Right ventricle myocardium inferior (tissue), 1 donor: ENCODE measurements at regions of chr2 and their contacts with region 1.

Region 1: GRCh38 chr2:7026742-7027141 is 109.5 kb downstream of the RNF144A start:
- DNase-seq: no peak
- ATAC-seq: no peak

Region 2: GRCh38 chr2:6917071-6917760 is 109.5 kb before region 1 on chr2 and contains the start of gene RNF144A:
- intact Hi-C with region 1: loop called (anchors 5 kb)
- DNase-seq: peak; percentile 88
- ATAC-seq: peak; percentile 86
- total RNA-seq, gene RNF144A: 16.9 TPM

Region 3: GRCh38 chr2:7007846-7008741 is 18.6 kb before region 1 on chr2:
- intact Hi-C with region 1: loop called (anchors 2 kb)
- DNase-seq: peak; percentile 96
- ATAC-seq: peak; percentile 89